Common myeloid progenitor, CD34-positive (primary cell): ENCODE measurements at regions of chr1 and their contacts with region 1.

Region 1: DNA sequence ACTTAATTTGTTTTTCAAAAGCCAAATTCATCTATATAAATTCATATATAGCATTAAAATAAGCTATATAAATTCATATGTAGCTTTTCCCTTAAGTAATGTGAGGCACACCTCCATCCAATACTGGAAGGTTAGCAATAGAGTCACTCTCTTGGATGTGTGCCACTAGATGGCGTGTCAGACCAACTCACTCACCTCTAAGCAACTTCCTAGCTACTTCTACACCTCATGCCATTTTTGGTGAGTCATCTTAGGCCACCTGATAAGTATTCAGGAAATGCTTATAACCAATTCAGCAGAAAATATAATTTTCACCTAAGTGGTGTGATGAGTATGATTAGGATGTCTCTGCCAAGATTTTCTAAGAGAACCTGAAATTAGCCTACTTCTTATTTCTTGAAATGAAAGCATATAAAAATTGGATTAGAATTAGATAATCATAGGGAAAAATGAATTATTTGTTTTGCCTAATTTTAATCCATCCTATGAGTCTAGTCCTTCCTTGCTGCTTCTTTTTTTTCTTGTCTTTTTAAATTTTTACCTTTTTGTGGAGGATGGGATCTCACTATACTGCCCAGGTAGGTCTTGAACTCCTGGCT is 34.4 kb upstream of the TADA1 start:
- DNase-seq: peak; percentile 95 to 97 (median 97)
- H3K4me3 ChIP-seq: no peak overlapping the region
- H3K27ac ChIP-seq: no peak overlapping the region
- H3K4me1 ChIP-seq: peaks cover 0 to 9% (median under 1%) of the 10 kb centered on the region in 4 experiments
- H3K27me3 ChIP-seq: no peaks in the 10 kb centered on the region

Region 2: DNA sequence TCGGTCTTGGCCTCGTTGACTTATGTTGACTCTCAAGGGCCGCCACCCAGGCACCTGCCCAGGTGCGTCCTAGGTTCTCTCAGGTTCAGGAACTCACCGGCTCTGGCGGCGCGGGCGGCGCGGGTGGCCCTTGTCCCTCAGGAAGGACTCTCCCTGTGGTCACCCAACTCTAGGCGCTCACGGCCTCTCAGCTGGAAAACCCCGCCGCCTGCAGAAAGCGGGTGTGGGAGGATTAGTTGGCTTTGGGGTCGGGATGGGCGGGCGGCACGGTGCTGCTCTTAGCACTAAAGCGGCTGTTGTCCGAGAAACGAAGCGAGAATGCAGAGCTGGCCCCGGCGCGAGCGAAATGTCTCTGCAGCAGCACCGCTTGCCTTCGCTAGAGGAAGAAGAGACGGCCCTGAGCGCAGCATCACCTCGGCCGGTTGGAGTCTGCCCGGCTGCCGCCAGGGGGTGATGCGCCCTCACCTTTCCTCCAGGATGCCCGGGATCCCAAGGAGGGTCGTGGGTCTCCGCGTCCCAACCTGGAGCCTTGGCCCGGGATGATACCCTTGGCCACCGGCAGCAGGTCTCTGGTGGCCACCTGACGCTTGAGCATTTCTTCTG is 26.4 kb before region 1 on chr1:
- CTCF ChIA-PET with region 1: interaction called, 42 read pairs
- POLR2A ChIA-PET with region 1: no interaction called
- DNase-seq: peak; percentile 52 to 66 (median 63)
- H3K4me3 ChIP-seq: peak overlapping the region in 3 of 7 experiments; percentile 45 to 70 (median 57)
- H3K27ac ChIP-seq: no peak overlapping the region
- H3K4me1 ChIP-seq: peaks cover 0 to 17% (median 14%) of the 10 kb centered on the region in 4 experiments
- H3K27me3 ChIP-seq: peaks cover 0 to 6% (median 0%) of the 10 kb centered on the region in 5 experiments

Region 3: GRCh38 chr1:166944186-166944967 is 33.9 kb after region 1 on chr1:
- CTCF ChIA-PET with region 1: interaction called, 12 read pairs
- POLR2A ChIA-PET with region 1: no interaction called
- DNase-seq: peak; percentile 37 to 90 (median 81)
- H3K4me3 ChIP-seq: peak overlapping the region in 3 of 7 experiments; percentile 22 to 49 (median 35)
- H3K27ac ChIP-seq: no peak overlapping the region
- H3K4me1 ChIP-seq: peaks cover 8 to 38% (median 28%) of the 10 kb centered on the region in 4 experiments
- H3K27me3 ChIP-seq: peaks cover 0 to 12% (median 3%) of the 10 kb centered on the region in 5 experiments

Region 4: GRCh38 chr1:167066333-167067122 is 156.0 kb after region 1 on chr1:
- CTCF ChIA-PET with region 1: interaction called, 666 read pairs
- POLR2A ChIA-PET with region 1: no interaction called
- DNase-seq: peak; percentile 59 to 68 (median 67)
- H3K4me3 ChIP-seq: peak overlapping the region in 4 of 7 experiments; percentile 39 to 70 (median 54)
- H3K27ac ChIP-seq: no peak overlapping the region
- H3K4me1 ChIP-seq: peaks cover 0 to 5% (median 1%) of the 10 kb centered on the region in 4 experiments
- H3K27me3 ChIP-seq: no peaks in the 10 kb centered on the region